Posterior cingulate gyrus (tissue), 11 donors: ENCODE measurements at regions of chr10 and their contacts with region 1.

Region 1: GRCh38 chr10:98045785-98046389 is 15.5 kb upstream of the CRTAC1 start:
- DNase-seq: peak; percentile 29 to 92 (median 56)

Region 2: DNA sequence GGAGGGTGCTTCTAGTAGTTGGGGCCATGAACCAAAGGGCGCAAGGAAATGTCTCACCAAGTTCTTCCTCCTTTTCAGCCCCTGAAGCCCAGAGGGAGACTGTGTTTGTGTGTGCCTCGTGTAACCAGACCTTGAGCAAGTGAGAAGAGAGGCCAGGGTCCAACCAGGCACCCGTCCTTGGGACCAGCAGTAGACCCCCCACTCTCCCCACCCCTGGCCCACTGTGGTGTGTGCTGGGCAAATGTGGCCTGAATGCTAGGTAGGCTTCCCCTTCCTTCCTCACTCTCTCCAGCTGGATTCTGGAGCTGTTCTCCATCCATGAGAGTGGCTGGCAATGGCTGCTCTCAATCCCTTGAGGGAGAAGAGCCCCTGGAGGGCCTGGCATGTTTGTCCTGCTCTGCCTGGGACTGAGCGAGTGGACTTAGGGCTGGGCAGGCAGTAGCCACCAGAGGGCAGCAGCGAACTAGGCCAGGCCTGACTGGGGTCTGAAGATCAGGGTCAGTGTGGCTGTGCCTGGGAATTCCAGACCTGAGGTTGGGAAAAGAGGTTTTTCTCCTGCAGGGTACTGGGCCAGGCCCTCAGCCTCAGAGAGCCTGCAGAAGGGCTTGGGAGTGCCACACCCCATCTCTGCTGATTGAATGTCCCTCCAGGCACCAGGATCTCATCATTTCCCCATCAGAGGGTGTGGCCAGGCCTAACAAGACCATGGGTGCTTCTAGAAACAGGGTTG is 286.6 kb before region 1 on chr10:
- intact Hi-C with region 1: loop called (anchors 5 kb)
- DNase-seq: peak; percentile 60 to 96 (median 75)

Region 3: DNA sequence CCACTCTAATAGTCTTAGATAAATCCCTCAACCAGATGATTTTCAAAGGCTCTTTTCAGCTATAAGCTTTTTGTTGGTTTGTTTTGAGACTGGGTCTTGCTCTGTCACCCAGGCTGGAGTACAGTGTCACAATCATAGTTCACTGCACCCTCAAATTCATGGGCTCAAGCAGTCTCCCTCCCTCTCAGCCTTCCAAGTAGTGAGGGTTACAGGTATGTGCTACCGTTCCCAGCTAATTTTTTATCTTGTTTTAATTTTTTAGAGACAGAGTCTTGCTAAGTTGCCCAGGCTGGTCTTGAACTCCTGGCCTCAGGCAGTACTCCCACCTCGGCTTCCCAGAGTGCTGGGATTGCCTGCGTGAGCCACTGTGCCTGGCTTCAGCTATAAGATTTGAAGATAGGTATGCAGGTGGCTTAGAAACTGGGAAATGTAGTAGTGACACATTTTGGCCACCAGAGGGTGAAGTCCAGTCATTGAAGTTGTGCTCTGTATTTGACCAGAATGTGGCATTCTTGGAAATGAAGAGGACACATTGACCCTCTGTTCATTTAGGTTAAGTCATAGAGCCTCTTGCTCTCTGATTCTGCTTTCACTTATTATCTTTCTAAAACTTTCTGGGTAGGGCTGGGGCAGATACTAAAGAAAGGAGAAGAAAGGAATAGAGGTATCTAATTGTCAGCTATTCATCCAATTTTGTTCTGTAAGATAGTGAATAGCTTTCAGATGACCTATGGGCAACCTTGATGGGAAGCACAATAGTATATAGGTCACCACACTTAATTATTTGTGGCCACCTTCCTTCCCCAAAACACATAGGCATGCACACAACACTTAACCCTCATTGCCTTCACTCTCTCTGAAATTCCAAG is 124.6 kb after region 1 on chr10:
- intact Hi-C with region 1: no loop called
- DNase-seq: peak in 4 of 10 donors; percentile 9 to 49 (median 34)